Posterior vena cava (tissue), 2 donors: ENCODE measurements at regions of chr18 and their contacts with region 1.

Region 1: DNA sequence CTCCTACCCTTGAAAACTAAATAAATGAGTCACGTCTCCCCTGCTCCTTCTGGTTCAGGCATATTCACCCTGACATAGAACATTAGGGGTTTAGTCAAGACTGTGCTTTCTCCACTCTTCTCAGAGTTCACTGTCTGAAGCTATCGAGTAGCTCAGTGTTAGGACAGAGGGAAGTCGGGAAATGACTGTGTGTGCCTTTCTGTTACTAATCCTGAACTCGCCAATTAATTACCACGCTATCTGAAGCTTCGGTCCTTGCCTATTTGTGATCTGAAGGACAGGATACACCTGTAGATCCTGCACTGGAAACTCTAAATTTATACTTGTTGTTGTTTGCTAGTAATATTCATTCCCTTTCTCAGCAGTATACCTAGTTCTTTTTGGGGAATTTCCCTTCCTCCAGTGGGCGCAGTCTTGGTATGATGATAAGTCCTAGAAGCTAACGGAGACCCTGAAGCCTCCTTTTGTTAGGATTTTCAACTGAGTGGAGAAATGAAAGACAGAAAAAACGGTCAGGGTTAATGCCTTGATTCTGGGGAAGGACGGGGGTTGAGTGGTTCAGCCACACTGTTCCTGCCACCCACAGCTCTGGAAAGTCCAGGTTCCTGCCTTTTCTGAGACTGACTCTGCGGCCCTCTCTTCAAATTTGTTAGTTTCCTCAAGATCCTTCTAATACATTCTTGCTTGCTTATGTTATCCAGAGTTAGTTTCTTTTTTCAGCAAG is 218.0 kb downstream of the DLGAP1 start:
- DNase-seq: no peak

Region 2: DNA sequence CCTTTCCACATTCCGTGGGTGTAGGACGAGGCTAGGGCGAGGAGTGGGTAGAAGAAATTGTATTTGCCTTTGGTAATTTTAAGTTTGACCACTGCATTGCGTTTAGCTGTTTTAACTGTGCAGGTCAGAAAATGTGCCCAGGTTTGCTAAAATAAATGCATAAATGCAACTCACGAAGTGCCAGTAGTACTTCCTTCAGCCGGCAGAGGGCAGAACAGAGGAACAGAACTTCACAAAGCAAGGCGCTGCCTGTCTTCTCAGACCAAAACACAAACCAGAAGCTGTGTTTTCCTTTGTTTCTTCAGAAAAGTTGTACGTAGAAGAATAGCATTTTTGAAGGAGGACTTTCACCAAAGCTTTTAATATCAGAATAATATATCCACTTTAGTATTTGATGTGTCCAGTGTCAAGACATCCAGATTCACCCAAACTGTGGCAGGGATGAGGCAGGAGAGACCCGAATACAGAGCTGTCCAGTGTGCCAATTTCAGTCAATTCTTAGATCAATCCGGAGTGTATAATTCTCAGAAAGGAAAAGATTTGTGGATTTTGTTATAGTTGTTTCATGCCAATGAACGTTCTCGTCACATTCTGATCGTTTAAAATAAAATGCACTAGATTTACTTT is 130.6 kb before region 1 on chr18:
- intact Hi-C with region 1: no loop called
- DNase-seq: no peak

Region 3: DNA sequence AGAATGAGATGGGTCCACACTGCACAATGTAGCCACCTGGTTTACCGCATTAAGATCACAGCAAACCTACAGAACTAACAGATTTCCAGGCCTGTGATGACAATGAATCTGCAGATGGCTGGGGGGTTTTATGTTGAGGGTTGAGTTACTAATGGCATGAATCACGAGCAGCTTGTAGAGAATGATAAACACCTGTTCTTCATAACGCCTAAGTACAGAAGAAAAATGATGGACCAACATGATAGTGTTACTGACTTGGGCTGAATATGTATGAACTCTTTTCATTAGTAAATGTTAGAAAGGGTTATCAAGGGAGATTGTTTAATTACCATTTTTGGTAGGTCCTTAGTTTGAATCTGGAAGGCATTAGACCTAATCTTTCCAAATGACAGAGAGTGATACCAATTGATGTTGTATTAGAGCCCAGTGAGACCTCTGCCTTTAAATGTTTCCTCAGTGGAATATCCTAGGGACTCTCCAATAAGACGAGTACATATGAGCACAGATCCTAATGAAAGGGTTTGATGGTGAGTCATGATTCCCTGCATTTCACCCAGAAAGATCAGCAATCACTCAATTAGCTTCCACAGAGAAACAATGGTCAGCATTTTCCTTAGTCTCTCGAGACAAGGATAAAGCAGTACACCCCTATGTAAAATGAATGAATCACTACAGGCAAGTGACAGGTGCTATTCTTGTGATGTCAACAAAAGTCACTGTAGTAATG is 25.8 kb before region 1 on chr18:
- intact Hi-C with region 1: loop called in 1 of 2 experiments (anchors 1 kb)
- DNase-seq: no peak

Region 4: GRCh38 chr18:4256766-4257417 is 19.8 kb after region 1 on chr18:
- intact Hi-C with region 1: loop called in 1 of 2 experiments (anchors 1 kb)
- DNase-seq: no peak

Region 5: DNA sequence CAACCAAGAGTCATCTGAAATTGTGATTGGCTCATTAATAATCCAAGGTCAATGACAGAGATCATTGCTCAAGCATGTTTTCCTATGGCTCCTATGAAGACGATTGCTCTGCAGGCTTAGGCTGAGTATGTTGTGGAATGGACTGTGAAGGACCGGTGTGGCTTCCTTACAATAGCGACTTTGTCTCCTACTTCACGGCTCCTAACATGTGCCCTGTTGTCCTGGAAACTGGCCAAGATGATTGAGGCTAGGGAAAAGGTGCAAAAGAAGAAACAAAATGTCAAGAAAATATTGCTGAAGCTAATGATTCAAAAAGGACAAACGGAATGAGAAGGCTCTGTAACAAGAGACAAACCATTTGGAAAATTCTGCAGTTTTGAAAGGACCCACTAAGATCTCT is 193.7 kb after region 1 on chr18:
- intact Hi-C with region 1: no loop called
- DNase-seq: no peak